ENCODE measurements at regions of chr5 and their contacts with region 1.

Region 1: DNA sequence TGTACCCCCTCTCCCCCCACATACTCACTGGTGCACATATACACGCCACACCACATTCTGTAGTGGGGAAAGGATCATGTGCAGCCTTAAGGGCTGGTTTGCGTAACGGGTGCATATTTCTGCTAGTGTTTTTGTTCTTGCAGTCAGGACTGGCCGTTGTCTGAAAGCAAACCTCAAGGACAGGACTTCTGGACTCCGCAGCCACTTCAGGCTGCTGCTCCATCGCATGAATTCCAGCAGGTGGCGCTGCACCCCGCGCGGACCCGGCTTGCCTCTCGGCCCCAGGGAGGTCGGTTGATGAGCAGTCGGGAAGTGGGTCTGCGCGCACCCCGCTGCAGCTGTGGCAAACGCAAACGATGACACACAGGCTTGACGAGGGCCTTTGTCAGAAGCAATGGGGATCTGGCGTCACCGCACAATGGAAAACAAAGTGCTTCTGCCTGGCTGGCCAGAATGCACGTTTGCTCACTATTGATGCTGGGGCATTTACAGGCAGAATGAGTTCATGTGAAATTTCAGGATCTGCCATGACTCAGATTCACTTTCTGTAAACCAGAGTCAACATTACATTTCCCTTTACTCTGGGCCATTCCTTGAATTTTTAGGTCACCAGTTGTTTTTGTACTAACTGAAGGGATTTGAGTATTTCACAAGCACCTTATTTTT is 36.3 kb upstream of the GLRX start:
- DNase-seq: peak; percentile 94
- ATAC-seq: peak; percentile 95
- H3K4me3 Mint-ChIP-seq: peak overlapping the region; percentile 53
- H3K27ac Mint-ChIP-seq: peak overlapping the region; percentile 37
- H3K4me1 Mint-ChIP-seq: peaks cover 44% of the 10 kb centered on the region
- H3K27me3 Mint-ChIP-seq: no peaks in the 10 kb centered on the region

Region 2: GRCh38 chr5:95870105-95870672 is 11.4 kb after region 1 on chr5:
- CTCF ChIA-PET with region 1: interaction called, 13 read pairs
- DNase-seq: peak; percentile 59
- ATAC-seq: peak; percentile 79
- H3K4me3 Mint-ChIP-seq: peak overlapping the region; percentile 58
- H3K27ac Mint-ChIP-seq: peak overlapping the region; percentile 94
- H3K4me1 Mint-ChIP-seq: peaks cover 38% of the 10 kb centered on the region
- H3K27me3 Mint-ChIP-seq: no peaks in the 10 kb centered on the region

Measured in activated CD8-positive, alpha-beta memory T cell treated with anti-CD3 and anti-CD28 coated beads, Interleukin-2, amount 10 ng/mL, durations not matched to agents 7 days and 5 days (primary cell).